ENCODE measurements at regions of chr16 and their contacts with region 1.

Region 1: GRCh38 chr16:78742501-78743283 is 643.2 kb downstream of the WWOX start:
- DNase-seq: peak; percentile 70
- H3K4me3 Mint-ChIP-seq: peak overlapping the region; percentile 74
- H3K27ac Mint-ChIP-seq: peak overlapping the region; percentile 77
- H3K4me1 Mint-ChIP-seq: peaks cover 33% of the 10 kb centered on the region
- H3K27me3 Mint-ChIP-seq: peaks cover 10% of the 10 kb centered on the region

Region 2: DNA sequence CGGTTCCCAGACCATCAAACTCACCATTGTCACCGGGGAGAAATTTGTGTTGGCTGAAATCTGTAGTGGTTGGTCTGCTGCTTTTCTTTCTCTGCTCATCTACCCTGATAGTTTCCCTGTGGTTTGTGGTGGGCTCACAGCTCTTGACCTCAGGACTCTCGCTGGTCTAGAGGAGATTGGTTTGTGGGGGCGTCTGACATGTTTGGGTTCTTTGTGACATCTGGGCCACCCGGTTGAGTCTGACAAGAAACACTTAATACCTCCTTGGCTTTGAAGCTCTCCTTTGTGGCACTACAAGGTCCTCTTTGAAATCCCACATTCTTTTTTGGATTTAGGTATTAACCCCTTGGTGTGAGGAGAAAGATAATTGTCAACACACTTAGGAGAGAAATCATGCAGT is 18.7 kb after region 1 on chr16:
- intact Hi-C with region 1: loop called (anchors 1 kb)
- DNase-seq: no peak
- H3K4me3 Mint-ChIP-seq: no peak overlapping the region
- H3K27ac Mint-ChIP-seq: no peak overlapping the region
- H3K4me1 Mint-ChIP-seq: no peaks in the 10 kb centered on the region
- H3K27me3 Mint-ChIP-seq: peaks cover 4% of the 10 kb centered on the region

Region 3: DNA sequence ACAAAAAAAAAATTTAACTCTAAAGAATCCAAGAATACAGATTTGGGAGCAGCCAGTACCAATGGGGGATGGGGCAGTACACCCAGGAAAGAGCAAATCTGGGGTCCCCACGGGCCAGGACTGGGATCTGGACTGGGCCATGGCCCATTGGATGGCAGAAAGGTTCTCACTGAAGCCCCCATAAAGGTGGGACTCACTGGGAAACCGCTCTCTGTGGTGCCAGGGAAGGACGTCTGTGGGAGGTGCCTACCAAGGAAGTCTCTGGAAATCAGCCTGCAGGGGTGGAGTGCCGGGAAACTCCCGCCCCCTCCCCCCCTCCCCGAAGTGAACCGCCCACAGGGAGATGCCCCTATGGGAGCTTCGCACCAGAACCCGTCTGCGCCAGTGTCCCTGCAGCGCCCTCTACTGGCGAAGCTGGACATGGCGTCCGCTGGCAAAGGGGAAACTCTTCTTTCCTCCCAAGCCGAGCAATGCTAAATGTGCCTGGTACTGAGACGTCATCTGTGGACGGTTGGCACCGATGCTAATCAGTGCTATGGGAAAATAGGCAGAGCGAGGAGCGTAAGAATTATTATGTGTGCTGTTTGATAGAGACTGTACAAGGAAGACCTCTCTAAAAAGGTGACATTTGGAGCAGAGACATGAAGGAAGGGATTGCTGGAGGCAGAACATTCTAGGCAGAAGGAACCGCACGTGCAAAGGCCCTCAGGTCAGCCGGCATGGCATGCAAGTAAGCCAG is 27.8 kb after region 1 on chr16:
- intact Hi-C with region 1: loop called (anchors 1 kb)
- DNase-seq: peak; percentile 65
- H3K4me3 Mint-ChIP-seq: peak overlapping the region; percentile 16
- H3K27ac Mint-ChIP-seq: peak overlapping the region; percentile 65
- H3K4me1 Mint-ChIP-seq: peaks cover 54% of the 10 kb centered on the region
- H3K27me3 Mint-ChIP-seq: no peaks in the 10 kb centered on the region

Region 4: GRCh38 chr16:78794581-78795250 is 52.0 kb after region 1 on chr16:
- intact Hi-C with region 1: loop called (anchors 1 kb)
- DNase-seq: no peak
- H3K4me3 Mint-ChIP-seq: no peak overlapping the region
- H3K27ac Mint-ChIP-seq: peak overlapping the region; percentile 77
- H3K4me1 Mint-ChIP-seq: peaks cover 35% of the 10 kb centered on the region
- H3K27me3 Mint-ChIP-seq: no peaks in the 10 kb centered on the region

Region 5: GRCh38 chr16:78892951-78893733 is 150.4 kb after region 1 on chr16:
- intact Hi-C with region 1: loop called (anchors 1 kb)
- DNase-seq: no peak
- H3K4me3 Mint-ChIP-seq: no peak overlapping the region
- H3K27ac Mint-ChIP-seq: peak overlapping the region; percentile 84
- H3K4me1 Mint-ChIP-seq: peaks cover 55% of the 10 kb centered on the region
- H3K27me3 Mint-ChIP-seq: no peaks in the 10 kb centered on the region

Region 6: DNA sequence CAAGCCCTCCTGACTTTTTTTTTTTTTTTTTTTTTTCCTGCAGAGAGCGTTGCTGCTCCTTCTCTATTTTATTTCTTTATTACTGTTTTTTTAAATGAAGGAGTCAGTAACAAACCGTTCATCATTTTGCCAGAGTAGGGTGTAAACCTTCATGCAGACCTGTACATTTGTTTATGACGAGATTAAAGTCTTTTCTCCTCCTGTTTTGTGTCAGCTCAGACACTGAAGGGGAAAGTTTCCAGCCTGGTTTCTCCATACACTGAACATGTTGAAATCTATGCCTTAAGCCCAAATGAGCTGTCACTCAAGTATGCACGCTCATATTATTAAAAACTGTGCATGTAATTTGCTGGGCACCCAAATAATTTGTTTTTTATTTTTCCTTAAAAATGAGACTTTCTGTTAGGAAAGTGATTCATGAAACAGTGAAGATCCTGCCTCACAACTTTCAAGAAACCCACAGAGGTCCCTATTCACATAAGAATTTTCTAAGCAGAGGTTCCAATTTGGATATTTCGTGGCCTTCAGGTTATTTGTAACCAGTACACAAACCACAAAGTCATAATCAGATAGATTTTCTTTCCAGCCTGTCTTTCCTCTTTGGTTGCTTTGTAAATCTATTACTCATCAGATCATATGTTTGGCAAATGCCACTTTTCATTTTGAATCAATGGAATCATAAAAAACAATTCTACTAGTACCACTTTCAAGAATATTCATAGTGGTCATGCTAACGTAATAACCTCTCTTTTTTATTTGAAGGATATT is 157.5 kb after region 1 on chr16:
- intact Hi-C with region 1: loop called (anchors 1 kb)
- DNase-seq: no peak
- H3K4me3 Mint-ChIP-seq: no peak overlapping the region
- H3K27ac Mint-ChIP-seq: peak overlapping the region; percentile 51
- H3K4me1 Mint-ChIP-seq: peaks cover 42% of the 10 kb centered on the region
- H3K27me3 Mint-ChIP-seq: no peaks in the 10 kb centered on the region